HepG2 (cell line): ENCODE measurements at regions of chr9 and their contacts with region 1.

Region 1: DNA sequence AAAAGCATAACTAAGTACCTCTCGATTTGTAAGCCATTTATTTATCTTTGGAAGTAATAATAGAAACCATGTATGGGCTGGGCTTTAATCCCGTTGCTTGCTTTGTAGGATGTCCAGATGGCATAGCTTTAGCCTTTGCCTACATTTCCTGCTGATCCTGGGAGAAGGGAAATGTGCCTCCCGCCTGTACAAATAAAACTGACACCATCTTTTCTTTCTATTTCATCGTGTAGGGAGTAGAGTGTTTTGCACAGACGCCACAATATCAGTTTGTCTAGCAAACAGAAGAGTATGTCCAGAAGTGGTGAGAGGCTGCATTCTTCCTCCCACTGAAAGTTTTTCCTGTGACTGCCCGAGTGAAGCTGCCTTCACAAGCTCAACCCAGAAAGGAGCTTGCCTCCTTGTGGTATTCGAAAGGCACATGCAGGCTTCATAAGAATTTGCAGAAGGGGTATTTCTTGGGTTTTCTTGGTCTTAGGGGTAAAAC is 24.7 kb upstream of the TJP2 start:
- DNase-seq: no peak
- ATAC-seq: no peak
- H3K4me3 ChIP-seq: no peak overlapping the region
- H3K27ac ChIP-seq: no peak overlapping the region
- H3K4me1 ChIP-seq: peaks cover 52% of the 10 kb centered on the region
- H3K27me3 ChIP-seq: no peaks in the 10 kb centered on the region
- CTCF ChIP-seq: no peak
- EP300 ChIP-seq: no peak
- POLR2A ChIP-seq: no peak
- RAD21 ChIP-seq: no peak

Region 2: GRCh38 chr9:69131682-69132081 is 17.7 kb before region 1 on chr9:
- CTCF ChIA-PET with region 1: no interaction called
- POLR2A ChIA-PET with region 1: interaction called, 10 read pairs
- in situ Hi-C with region 1: no loop called
- intact Hi-C with region 1: loop called (anchors 1 kb)
- DNase-seq: peak; percentile 93
- ATAC-seq: peak; percentile 97
- H3K4me3 ChIP-seq: peak overlapping the region in 1 of 3 experiments; percentile 45; a peak in 1 of 6 replicates
- H3K27ac ChIP-seq: peak overlapping the region; percentile 70
- H3K4me1 ChIP-seq: peaks cover 63% of the 10 kb centered on the region
- H3K27me3 ChIP-seq: no peaks in the 10 kb centered on the region
- CTCF ChIP-seq: no peak
- EP300 ChIP-seq: peak in 1 of 2 experiments; percentile 54; a peak in 2 of 4 replicates
- POLR2A ChIP-seq: peak in 1 of 2 experiments; percentile 27; a peak in 2 of 4 replicates
- RAD21 ChIP-seq: no peak